PC-9 (cell line): ENCODE measurements at regions of chr1 and their contacts with region 1.

Region 1: DNA sequence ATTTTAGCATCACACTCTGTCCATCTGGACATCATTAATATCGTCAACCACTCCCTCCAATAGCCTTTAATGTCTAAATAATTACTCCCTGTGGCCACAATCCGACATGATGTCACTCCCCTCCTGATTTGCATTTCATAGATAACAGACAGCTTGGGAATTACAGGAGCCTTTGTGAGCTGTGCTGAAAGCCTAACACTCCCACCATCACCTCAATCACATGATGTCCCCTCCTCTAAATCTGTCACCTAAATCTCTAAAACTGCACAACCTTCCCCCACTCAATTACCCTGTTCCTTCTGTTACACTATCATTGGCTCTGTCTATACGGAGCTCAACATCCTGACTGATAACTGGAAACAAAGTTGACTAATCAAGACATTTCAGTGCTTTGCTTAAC is 14.3 kb downstream of the NHLH2 start:
- DNase-seq: no peak
- H3K4me3 ChIP-seq: no peak overlapping the region
- H3K27ac ChIP-seq: no peak overlapping the region
- H3K4me1 ChIP-seq: no peaks in the 10 kb centered on the region
- H3K27me3 ChIP-seq: no peaks in the 10 kb centered on the region
- CTCF ChIP-seq: no peak

Region 2: DNA sequence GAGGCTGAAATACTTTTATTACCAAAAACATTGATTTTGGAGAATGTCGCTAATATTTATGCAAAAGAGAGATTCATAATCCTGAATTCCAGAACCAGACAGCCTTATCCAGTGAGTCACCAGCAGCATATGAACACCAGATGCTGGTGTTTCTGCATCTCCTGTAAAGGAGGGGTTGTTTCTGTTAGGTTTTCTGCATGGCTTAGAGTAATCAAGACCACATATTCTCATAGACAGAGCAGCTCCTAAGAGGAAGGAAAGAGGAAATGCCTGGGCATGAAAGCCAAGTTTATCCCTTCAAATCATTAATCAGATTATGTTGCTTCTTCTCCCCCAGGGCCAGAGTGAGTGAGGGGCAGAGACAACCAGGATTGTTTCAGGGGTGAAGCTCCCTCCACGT is 574.8 kb before region 1 on chr1:
- CTCF ChIA-PET with region 1: interaction called, 11 read pairs
- POLR2A ChIA-PET with region 1: no interaction called
- intact Hi-C with region 1: no loop called
- DNase-seq: no peak
- H3K4me3 ChIP-seq: no peak overlapping the region
- H3K27ac ChIP-seq: no peak overlapping the region
- H3K4me1 ChIP-seq: no peaks in the 10 kb centered on the region
- H3K27me3 ChIP-seq: no peaks in the 10 kb centered on the region
- CTCF ChIP-seq: no peak

Region 3: GRCh38 chr1:115613767-115614166 is 212.9 kb before region 1 on chr1:
- CTCF ChIA-PET with region 1: no interaction called
- POLR2A ChIA-PET with region 1: no interaction called
- intact Hi-C with region 1: no loop called
- DNase-seq: peak in 1 of 2 experiments; percentile 19
- H3K4me3 ChIP-seq: no peak overlapping the region
- H3K27ac ChIP-seq: no peak overlapping the region
- H3K4me1 ChIP-seq: peaks cover 8% of the 10 kb centered on the region
- H3K27me3 ChIP-seq: no peaks in the 10 kb centered on the region
- CTCF ChIP-seq: no peak

Region 4: DNA sequence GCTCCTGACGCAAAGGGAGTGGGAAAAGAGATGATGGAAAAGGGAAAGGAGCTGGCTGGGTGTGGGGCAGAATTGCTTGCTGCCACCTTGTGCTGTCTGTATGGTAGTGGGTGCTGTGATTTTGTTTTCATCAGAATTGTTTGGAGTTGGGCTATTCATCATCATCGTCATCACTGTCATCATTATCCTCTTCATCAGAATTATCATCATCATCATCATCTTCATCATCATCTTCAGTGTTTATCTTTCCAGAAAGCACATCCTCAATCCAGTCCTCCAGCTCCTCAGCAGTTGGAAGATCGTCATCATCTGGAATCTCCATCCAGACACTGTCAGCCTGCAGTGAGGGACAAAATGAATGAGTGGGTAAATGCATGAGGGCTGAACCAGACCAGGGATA is 125.5 kb before region 1 on chr1:
- CTCF ChIA-PET with region 1: no interaction called
- POLR2A ChIA-PET with region 1: no interaction called
- intact Hi-C with region 1: no loop called
- DNase-seq: no peak
- H3K4me3 ChIP-seq: no peak overlapping the region
- H3K27ac ChIP-seq: no peak overlapping the region
- H3K4me1 ChIP-seq: peaks cover 12% of the 10 kb centered on the region
- H3K27me3 ChIP-seq: no peaks in the 10 kb centered on the region
- CTCF ChIP-seq: no peak

Region 5: DNA sequence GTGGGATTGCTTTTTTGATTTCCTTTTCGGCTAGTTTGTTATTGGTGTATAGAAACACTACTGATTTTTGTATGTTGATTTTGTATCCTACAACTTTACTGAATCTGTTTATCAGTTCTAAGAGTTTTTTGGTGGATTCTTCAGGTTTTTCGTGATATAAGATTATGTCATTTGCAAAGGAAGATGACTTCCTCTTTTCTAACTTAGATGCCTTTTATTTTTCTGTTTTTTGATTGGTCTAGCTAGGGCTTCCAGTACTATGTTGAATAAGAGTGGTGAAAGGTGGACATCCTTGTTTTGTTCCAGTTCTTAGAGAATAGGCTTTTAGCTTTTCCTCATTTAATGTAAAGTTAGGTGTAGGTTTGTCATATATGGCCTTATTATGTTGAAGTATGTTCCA is 27.4 kb after region 1 on chr1:
- CTCF ChIA-PET with region 1: no interaction called
- POLR2A ChIA-PET with region 1: no interaction called
- intact Hi-C with region 1: no loop called
- DNase-seq: no peak
- H3K4me3 ChIP-seq: no peak overlapping the region
- H3K27ac ChIP-seq: no peak overlapping the region
- H3K4me1 ChIP-seq: no peaks in the 10 kb centered on the region
- H3K27me3 ChIP-seq: no peaks in the 10 kb centered on the region
- CTCF ChIP-seq: no peak

Region 6: DNA sequence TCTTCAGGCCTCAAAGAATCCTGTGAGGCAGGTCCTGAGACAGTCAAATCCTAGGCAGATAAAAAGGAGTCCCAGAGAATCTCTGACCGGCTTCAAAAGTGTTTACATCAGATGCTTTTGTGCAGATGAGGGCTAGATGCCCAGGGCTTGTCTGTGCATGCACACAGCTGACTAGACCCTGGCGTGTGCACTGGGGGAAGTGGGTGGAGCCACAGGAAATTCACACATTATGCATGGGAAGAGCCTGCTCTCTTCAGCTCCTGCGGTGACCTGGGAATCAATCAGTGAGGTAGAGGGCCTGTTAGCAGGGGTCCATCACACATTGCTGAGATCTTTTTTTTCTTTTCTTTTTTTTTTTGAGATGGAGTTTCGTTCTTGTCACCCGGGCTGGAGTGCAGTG is 50.9 kb after region 1 on chr1:
- CTCF ChIA-PET with region 1: no interaction called
- POLR2A ChIA-PET with region 1: no interaction called
- intact Hi-C with region 1: no loop called
- DNase-seq: no peak
- H3K4me3 ChIP-seq: no peak overlapping the region
- H3K27ac ChIP-seq: no peak overlapping the region
- H3K4me1 ChIP-seq: 0 out of 2 replicates have a peak, but pooled peaks cover 5% of the 10 kb centered on the region
- H3K27me3 ChIP-seq: no peaks in the 10 kb centered on the region
- CTCF ChIP-seq: no peak